HEK293 (cell line): ENCODE measurements at regions of chr1 and their contacts with region 1.

Region 1: GRCh38 chr1:153990468-153991150 is at the start of gene RPS27:
- H3K4me3 ChIP-seq: peak within 1 kb of the TSS; percentile 93
- H3K27ac ChIP-seq: peak within 1 kb of the TSS; percentile 67
- H3K4me1 ChIP-seq: peaks cover 3% of the 10 kb centered on the region; the same call in 1 of the 2 replicates
- CTCF ChIP-seq: no peak

Region 2: DNA sequence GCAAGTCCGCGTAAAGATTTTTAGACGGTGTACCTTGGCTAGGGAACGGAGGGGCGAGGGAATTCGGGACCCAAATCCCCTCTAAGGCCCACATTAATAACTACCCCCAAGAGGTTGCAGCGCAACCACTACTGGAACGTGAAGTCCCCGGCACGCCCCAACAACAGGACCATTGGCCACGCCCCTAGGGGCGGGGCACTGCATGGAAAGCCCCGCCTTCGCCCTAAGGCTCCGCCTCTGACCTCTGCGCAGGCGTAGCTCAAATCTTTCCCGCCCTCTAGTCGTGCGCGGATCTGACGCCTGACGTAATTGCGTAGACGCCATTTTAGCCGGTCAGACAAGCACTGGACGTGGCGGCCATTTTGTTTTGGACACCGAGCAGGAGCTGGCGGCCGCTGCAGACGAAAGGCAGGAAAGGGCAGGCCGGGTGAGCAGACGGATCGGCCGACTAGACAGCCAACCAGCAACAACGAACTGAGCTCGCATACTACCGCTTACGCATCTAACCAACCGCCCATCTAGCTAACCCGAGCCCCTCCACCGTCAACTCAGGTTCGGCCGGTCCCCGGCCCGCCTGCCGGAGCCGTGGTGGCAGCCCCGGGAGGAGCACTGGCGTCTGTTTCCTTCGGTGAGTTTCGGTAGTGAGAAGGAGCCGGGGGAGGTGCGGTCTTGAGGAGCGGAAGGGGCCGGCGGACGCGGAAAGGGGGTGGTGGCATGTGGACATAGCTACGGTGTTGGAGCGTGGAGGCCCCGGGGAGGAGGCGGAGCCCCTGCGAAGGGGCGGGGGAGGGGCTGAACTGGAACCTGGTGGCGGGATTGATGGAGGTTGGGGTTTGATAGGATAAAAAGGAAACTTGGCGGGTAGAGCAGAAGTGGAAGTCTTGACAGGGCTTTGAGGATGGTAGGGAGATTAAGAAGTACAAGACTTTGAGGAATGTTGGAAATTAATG is 356.6 kb before region 1 on chr1 and contains the start of gene CHTOP:
- CTCF ChIA-PET with region 1: interaction called, 5 read pairs
- POLR2A ChIA-PET with region 1: interaction called, 10 read pairs
- H3K4me3 ChIP-seq: peak within 1 kb of the TSS; percentile 79
- H3K27ac ChIP-seq: peak within 1 kb of the TSS; percentile 99
- H3K4me1 ChIP-seq: no peaks in the 10 kb centered on the region
- CTCF ChIP-seq: peak; percentile 30; the same call in 1 of the 2 replicates

Region 3: DNA sequence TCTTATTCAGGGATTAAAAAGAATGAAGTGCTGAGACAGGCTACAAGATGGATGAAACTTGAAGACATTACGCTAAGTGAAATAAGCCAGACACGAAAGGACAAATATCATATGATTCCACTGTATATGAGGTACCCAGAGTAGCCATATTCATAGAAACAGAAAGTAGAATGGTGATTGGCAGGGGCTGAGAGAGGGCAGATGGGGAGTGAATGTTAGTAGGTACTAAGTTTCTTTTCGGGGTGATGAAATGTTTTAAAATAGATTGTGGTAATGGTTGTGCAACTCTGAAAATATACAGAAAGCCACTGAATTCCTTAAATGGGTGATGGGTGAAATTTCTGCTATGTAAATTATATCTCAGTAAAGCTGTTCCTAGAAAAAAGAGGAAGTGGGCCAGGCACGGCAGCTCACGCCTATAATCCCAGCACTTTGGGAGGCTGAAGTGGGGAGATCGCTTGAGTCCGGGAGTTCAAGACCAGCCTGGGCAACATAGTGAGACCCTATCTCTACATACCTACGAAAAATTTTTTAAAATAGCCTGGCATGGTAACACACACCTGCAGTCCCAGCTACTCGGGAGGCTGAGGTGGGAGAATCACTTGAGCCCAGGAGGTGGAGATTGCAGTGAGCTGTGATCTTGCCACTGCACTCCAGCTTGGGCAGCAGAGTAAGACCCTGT is 199.5 kb before region 1 on chr1:
- CTCF ChIA-PET with region 1: interaction called, 46 read pairs
- POLR2A ChIA-PET with region 1: interaction called, 4 read pairs
- H3K4me3 ChIP-seq: no peak overlapping the region
- H3K27ac ChIP-seq: no peak overlapping the region
- H3K4me1 ChIP-seq: no peaks in the 10 kb centered on the region
- CTCF ChIP-seq: no peak

Region 4: GRCh38 chr1:153827168-153827964 is 163.2 kb before region 1 on chr1:
- CTCF ChIA-PET with region 1: interaction called, 30 read pairs
- POLR2A ChIA-PET with region 1: interaction called, 4 read pairs
- H3K4me3 ChIP-seq: no peak overlapping the region
- H3K27ac ChIP-seq: no peak overlapping the region
- H3K4me1 ChIP-seq: no peaks in the 10 kb centered on the region
- CTCF ChIP-seq: no peak

Region 5: DNA sequence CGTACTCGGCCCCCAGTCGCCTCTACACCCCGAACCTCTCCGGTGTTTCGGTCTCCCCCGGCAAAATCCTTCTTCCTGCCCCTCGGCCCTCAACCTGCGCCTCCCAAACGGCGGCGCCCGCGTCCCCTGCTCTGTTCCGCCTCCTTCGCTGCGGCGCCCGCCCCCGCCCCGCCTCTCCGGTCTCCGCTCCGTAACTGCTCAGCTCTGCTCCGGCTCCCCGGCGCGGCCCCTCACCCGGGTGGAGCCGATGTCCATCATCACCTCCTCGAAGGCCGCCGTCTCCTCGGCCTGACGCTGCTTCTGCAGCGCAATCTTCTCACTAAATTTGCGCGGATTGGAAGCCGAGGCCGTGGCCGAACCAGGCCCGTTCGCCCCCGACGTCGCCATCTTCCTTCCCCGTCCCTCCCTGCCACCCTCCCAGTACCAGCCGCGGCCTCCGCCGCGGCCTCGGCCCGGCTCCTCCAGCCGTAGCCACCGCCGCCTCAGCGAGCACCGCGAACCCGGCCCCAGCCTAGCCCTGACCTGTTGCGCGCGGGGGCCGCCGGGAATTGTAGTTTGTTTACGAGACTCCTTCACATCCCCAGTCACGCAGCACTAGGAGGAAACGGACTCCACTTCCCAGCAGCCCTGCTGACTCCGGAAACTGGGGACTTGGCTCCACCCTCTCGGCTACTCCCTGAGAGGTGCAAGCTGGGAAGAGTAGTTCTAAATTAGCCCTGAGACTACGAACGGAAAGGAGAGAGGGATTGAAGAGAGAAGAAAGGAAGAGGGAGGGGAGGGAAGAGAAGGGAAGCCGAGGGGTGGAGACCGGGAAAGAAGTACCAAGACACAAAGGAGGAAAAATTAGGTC is 32.3 kb before region 1 on chr1 and contains the start of gene CRTC2:
- CTCF ChIA-PET with region 1: interaction called, 9 read pairs
- POLR2A ChIA-PET with region 1: interaction called, 17 read pairs
- H3K4me3 ChIP-seq: peak within 1 kb of the TSS; percentile 89
- H3K27ac ChIP-seq: peak within 1 kb of the TSS; percentile 90
- H3K4me1 ChIP-seq: peaks cover 13% of the 10 kb centered on the region; the same call in 1 of the 2 replicates
- CTCF ChIP-seq: peak; percentile 75; the same call in 1 of the 2 replicates

Region 6: GRCh38 chr1:154093699-154094098 is 103.1 kb after region 1 on chr1:
- CTCF ChIA-PET with region 1: no interaction called
- POLR2A ChIA-PET with region 1: no interaction called
- H3K4me3 ChIP-seq: no peak overlapping the region
- H3K27ac ChIP-seq: no peak overlapping the region
- H3K4me1 ChIP-seq: no peaks in the 10 kb centered on the region
- CTCF ChIP-seq: no peak

Region 7: GRCh38 chr1:154272217-154272998 is 281.8 kb after region 1 on chr1 and contains the start of gene HAX1:
- CTCF ChIA-PET with region 1: no interaction called
- POLR2A ChIA-PET with region 1: interaction called, 10 read pairs
- H3K4me3 ChIP-seq: peak within 1 kb of the TSS; percentile 80
- H3K27ac ChIP-seq: peak within 1 kb of the TSS; percentile 62; the same call in 1 of the 2 replicates
- H3K4me1 ChIP-seq: no peaks in the 10 kb centered on the region
- CTCF ChIP-seq: peak; percentile 93